Right ventricle myocardium inferior (tissue), 1 donor: ENCODE measurements at regions of chr11 and their contacts with region 1.

Region 1: DNA sequence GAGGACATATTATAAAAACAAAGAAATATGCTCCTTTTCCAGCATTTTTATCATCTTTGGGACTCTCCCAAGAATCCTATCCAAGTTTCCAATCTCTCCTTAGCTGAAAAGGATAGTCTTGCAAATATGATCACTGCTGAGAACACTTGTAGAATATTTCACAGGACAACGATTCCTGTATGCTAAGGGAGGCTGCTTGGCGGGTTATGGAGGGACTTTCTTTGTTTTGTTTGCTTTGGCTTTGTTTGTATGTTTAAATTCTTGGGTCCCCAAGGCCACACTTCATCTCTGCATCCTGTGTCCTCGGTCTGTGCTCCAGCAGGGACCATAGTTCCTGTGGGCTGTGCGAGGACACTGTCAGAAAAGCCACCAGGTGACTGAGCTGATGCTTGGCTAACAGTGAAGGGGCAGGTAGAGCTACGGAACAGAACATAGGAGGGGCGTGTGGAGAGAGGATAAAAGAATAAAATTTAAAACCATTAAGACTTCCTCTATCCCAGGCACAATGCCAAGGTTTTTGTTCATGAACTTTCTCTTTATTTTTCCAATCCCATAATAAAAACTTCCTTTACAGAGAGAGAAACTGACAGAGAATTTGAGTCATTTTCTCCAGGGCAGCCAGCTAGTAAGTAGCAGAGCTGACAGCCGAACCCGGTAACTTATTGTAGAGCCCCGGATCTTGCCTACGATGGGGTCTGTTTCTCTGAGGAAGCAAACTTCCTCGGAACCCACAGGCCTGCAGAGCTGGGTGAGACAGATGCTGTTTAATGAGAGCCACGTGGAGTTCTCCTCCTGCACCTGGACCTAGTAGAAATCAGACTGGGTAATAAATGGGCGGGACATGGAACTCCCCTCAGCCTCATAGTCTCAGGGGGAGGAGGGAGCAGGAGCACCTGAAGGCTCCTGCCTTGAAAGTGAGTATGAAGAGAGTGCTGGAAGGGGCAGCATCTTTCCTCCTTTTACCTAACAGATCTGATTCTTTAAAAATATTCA is at the start of gene IZUMO1R:
- DNase-seq: no peak
- ATAC-seq: peak; percentile 67
- total RNA-seq, gene IZUMO1R: not detected

Region 2: DNA sequence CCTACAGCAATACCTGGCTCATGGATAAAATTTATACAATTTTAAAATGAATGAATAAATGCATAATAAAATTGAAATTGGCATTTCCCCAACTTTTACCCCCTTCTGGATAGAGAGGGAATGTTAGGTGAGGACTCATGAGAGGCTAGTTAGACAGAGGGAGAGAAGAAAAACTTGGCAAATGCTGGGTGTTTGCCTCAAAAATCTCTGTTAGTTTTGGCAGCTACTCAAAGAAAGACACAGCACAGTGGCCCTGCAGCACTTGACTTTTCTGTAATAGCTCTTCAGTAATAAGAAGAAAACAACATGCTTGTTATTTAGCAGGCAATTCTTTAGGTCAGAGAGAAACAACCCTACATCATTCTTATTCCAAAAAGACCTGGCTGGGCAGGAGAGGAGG is 20.6 kb before region 1 on chr11:
- intact Hi-C with region 1: loop called (anchors 2 kb)
- DNase-seq: no peak
- ATAC-seq: peak; percentile 76

Region 3: DNA sequence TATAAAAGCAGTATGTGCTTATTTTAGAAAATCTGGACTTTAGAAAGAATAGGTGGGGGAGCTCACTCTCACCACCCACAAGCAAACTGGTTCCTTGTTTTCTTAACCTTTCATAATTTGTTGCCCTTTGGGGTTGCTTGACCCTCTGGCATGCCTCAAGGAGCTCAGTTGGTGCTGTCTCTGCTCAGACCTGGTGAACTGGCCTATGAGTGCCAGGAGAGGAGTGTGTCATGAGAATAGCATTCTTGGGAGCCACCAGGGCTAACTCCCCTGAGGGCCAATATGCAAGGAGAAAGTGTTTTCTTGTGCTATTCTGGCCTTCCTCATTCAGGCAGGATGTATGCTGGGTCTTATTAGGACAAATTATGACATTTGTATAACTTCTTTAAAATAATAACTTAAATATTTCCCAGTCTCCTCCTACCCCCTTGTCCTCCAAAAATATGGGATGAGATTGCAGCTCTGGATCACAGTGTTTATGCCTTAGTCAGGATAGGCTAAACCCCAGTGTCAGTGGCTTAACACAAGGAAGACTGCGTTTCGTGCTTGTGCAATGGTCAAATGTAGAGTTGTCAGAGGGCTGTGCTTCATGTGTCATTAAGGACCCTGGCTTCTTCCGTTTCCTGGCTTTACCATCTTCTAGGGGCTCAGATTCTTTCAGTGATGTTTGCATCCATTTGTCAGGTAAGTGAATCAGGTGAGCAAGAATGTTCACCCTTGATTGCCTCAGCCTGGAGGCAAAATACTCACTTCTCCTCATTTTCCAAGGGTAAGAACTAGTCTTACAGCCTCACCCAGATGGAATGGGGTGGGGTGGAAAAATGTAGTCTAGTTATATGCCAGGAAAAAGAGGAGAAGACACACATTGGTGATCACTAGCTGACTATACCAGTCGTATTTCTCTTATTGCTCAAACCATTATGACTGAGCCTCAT is 443.2 kb after region 1 on chr11:
- intact Hi-C with region 1: no loop called
- DNase-seq: no peak
- ATAC-seq: no peak